ENCODE measurements at regions of chr1 and their contacts with region 1.

Region 1: GRCh38 chr1:61049850-61050540 is 32.4 kb upstream of the NFIA start:
- DNase-seq: peak; percentile 93 to 97 (median 94)
- ATAC-seq: peak; percentile 90
- H3K4me3 ChIP-seq: peak overlapping the region; percentile 54 to 76
- H3K27ac ChIP-seq: peak overlapping the region; percentile 97 to 98 (median 98)
- H3K4me1 ChIP-seq: peaks cover 17% of the 10 kb centered on the region
- H3K27me3 ChIP-seq: no peaks in the 10 kb centered on the region
- CTCF ChIP-seq: peak; percentile 95 to 98 (median 97)
- POLR2A ChIP-seq: peak; percentile 39 to 76 (median 65)

Region 2: DNA sequence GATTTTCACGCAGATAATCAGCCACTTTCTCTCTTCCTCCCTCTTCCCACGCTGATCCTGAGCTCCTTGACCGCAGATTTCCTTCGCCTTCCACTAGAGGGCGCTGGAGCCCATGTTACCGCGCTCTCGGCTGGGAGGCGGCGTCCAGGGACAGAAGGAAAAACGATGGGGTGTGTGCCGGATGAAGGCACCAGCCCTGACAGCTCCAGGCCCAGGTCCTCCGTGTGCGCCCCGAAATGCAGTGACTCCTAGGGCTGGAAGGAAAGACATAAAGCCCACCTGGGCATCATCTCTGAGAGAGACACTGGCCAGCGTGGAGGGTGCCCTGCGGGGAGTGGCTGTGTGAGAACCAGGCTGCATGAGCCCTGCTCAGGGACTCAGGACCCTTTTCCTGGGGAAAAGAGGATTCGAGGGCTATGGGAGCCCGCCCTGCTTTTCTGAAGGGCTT is 1078.5 kb before region 1 on chr1:
- intact Hi-C with region 1: loop called (anchors 10 kb)
- DNase-seq: peak; percentile 69 to 75 (median 70)
- ATAC-seq: peak; percentile 77
- H3K4me3 ChIP-seq: no peak overlapping the region
- H3K27ac ChIP-seq: no peak overlapping the region
- H3K4me1 ChIP-seq: peaks cover 24% of the 10 kb centered on the region
- H3K27me3 ChIP-seq: no peaks in the 10 kb centered on the region
- CTCF ChIP-seq: peak; percentile 77 to 94 (median 83)
- POLR2A ChIP-seq: no peak

Region 3: GRCh38 chr1:61453111-61453961 is 403.3 kb after region 1 on chr1:
- intact Hi-C with region 1: loop called (anchors 10 kb)
- DNase-seq: peak; percentile 79 to 89 (median 85)
- ATAC-seq: peak; percentile 85
- H3K4me3 ChIP-seq: no peak overlapping the region
- H3K27ac ChIP-seq: peak overlapping the region; percentile 7 to 54 (median 32)
- H3K4me1 ChIP-seq: peaks cover 21% of the 10 kb centered on the region
- H3K27me3 ChIP-seq: no peaks in the 10 kb centered on the region
- CTCF ChIP-seq: peak; percentile 44 to 84 (median 74)
- POLR2A ChIP-seq: no peak